ENCODE measurements at regions of chr3 and their contacts with region 1.

Region 1: GRCh38 chr3:46705022-46705530 is 3.9 kb downstream of the TMIE start:
- DNase-seq: peak; percentile 67
- H3K4me3 ChIP-seq: no peak overlapping the region
- H3K27ac ChIP-seq: no peak overlapping the region
- H3K4me1 ChIP-seq: peaks cover 11% of the 10 kb centered on the region
- H3K27me3 ChIP-seq: peaks cover 6 to 7% of the 10 kb centered on the region in 2 experiments
- CTCF ChIP-seq: peak; percentile 88 to 92
- POLR2A ChIP-seq: no peak

Region 2: DNA sequence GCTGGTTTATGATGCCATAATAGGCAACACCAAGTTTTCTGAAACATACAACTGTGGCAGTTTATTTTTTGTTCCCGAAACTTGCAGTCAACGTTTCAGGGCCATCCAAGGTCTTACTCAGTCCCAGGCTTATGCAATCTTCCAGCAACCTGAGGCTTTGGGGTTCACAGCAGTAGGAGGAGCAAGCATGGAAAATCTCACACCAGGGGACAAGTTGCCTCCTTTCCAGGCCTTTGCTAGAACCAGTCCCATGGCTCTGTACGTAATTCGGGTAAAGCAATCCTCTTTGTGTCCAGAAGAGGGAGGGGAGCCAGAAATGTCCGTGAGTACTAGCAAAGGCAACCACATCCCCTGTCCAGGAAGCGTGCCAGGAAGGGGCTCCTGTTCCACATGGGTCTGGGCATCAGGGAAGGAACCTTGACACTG is 97.5 kb before region 1 on chr3:
- CTCF ChIA-PET with region 1: no interaction called
- POLR2A ChIA-PET with region 1: no interaction called
- dilution Hi-C with region 1: no loop called
- intact Hi-C with region 1: no loop called
- DNase-seq: no peak
- H3K4me3 ChIP-seq: no peak overlapping the region
- H3K27ac ChIP-seq: no peak overlapping the region
- H3K4me1 ChIP-seq: no peaks in the 10 kb centered on the region
- H3K27me3 ChIP-seq: peaks cover 3 to 5% of the 10 kb centered on the region in 2 experiments
- CTCF ChIP-seq: no peak
- POLR2A ChIP-seq: no peak

Region 3: GRCh38 chr3:46845791-46846623 is 140.9 kb after region 1 on chr3:
- CTCF ChIA-PET with region 1: interaction called, 10 read pairs
- POLR2A ChIA-PET with region 1: no interaction called
- dilution Hi-C with region 1: no loop called
- intact Hi-C with region 1: loop called (anchors 1 kb)
- DNase-seq: peak; percentile 56
- H3K4me3 ChIP-seq: peak overlapping the region in 2 of 3 experiments; percentile 19 to 41
- H3K27ac ChIP-seq: peak overlapping the region; percentile 3
- H3K4me1 ChIP-seq: peaks cover 14% of the 10 kb centered on the region
- H3K27me3 ChIP-seq: peaks cover 2 to 8% of the 10 kb centered on the region in 2 experiments
- CTCF ChIP-seq: peak; percentile 33 to 56
- POLR2A ChIP-seq: no peak

Region 4: DNA sequence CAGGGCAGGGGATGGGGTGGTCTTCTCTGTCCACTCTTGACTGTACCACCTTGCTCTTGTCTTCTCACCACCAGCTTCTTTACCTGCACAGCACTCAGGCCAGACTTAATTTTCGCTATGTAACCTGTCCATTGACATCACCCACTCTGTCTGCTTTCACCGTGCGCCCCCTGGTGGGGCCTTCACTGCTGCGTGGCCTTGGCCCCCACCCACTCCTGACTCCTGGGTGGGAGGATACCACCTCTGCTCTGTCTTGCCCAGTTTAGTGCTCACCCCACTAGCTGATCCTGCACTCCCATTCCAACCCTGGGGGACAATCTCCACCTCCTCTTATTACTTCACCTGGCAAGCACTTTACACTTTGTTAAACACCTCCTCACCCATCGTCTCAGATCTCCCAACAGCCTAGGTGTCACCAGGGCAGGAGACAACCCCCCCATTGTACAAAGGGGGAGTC is 190.2 kb after region 1 on chr3:
- CTCF ChIA-PET with region 1: interaction called, 26 read pairs
- POLR2A ChIA-PET with region 1: no interaction called
- dilution Hi-C with region 1: no loop called
- intact Hi-C with region 1: loop called (anchors 1 kb)
- DNase-seq: peak; percentile 56
- H3K4me3 ChIP-seq: no peak overlapping the region
- H3K27ac ChIP-seq: no peak overlapping the region
- H3K4me1 ChIP-seq: peaks cover 6% of the 10 kb centered on the region
- H3K27me3 ChIP-seq: no peaks in the 10 kb centered on the region
- CTCF ChIP-seq: peak; percentile 77 to 89
- POLR2A ChIP-seq: no peak

Region 5: DNA sequence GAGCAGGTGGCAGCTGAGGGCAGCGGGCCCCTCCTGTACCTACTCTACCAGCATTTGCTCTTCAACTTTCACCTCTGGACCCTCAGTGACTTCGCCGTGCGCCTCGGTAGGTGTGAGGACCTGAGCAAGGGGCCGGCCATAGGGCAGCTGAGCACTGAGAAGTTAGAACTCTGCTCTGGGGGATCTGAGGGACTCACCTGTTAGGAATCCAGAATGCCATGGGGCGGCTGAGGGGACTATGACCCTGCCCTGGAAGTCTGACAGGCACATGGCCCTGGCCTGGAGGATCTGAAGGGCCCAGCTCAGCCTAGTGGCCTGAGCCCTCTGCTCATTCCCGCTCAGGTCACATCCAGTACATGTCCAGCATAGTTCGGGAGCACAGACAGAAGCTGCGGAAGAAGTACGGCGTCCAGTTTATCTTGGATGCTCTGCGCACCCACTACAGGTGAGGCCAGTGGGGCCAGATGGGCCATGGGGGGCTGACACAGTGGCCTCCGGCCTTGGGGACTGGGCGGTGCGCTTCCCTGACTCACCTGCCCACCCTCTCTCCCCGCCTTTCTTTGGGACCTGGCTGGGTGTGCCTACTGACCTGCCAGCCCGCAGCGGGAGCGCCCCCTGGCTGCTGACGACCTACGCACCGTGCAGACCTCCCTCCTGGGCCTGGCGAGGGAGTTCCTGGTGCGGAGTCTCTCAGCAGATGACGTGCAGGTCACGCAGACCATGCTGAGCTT is 293.2 kb after region 1 on chr3:
- CTCF ChIA-PET with region 1: no interaction called
- POLR2A ChIA-PET with region 1: no interaction called
- dilution Hi-C with region 1: no loop called
- intact Hi-C with region 1: loop called (anchors 10 kb)
- DNase-seq: peak; percentile 48
- H3K4me3 ChIP-seq: no peak overlapping the region
- H3K27ac ChIP-seq: no peak overlapping the region
- H3K4me1 ChIP-seq: no peaks in the 10 kb centered on the region
- H3K27me3 ChIP-seq: no peaks in the 10 kb centered on the region
- CTCF ChIP-seq: peak; percentile 84 to 93
- POLR2A ChIP-seq: peak; percentile 29

Region 6: DNA sequence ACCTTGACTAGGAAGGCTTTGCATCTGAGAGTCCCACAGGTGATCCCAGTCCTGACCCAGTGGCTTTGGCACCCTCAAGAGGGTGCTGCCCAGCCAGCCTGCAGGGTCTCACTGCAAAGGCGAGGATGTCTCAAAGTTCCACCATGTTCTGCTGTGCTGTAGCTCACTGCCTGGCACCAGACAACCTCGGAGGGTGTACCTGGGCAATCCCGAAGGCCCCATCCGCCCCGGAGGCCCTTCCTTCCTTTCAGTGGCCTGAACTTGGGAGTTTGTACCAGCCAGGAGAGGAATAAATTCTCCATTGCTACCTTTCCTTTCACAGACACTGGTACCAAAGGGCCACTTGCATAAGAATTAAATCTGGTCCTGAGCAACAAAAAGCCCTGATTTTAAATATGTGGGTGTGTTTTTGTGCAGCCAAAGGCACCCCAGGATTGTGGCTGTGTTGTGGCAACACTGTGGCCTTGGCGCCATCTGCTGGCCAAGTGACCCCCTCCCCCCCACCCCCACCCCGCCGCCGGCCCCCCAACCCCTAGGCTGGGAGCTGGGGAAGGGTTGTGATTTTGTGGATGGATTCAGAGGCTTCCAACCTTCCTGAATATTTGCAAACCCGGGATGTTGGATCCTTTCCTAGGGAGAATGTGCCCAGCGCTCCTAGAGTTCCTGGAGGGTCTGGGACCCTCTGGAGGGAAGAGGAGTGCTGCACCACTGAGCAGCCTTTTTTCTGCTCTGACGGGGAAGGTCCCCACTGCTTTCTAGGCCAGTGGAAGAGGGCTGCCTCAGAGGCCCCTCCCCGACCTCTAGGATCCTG is 666.0 kb after region 1 on chr3:
- CTCF ChIA-PET with region 1: no interaction called
- POLR2A ChIA-PET with region 1: no interaction called
- dilution Hi-C with region 1: no loop called
- intact Hi-C with region 1: loop called (anchors 10 kb)
- DNase-seq: no peak
- H3K4me3 ChIP-seq: no peak overlapping the region
- H3K27ac ChIP-seq: no peak overlapping the region
- H3K4me1 ChIP-seq: no peaks in the 10 kb centered on the region
- H3K27me3 ChIP-seq: no peaks in the 10 kb centered on the region
- CTCF ChIP-seq: peak in 1 of 2 donors; percentile 41
- POLR2A ChIP-seq: no peak